ENCODE measurements at regions of chr3 and their contacts with region 1.

Region 1: GRCh38 chr3:195271116-195271858 is at the start of gene XXYLT1:
- DNase-seq: peak; percentile 99
- H3K4me3 Mint-ChIP-seq: peak within 1 kb of the TSS; percentile 85
- H3K27ac Mint-ChIP-seq: peak within 1 kb of the TSS; percentile 71
- H3K4me1 Mint-ChIP-seq: peaks cover 37% of the 10 kb centered on the region
- H3K27me3 Mint-ChIP-seq: no peaks in the 10 kb centered on the region
- CTCF ChIP-seq: peak; percentile 100
- total RNA-seq, gene XXYLT1: 25.9 and 29.2 TPM in 2 replicates

Region 2: DNA sequence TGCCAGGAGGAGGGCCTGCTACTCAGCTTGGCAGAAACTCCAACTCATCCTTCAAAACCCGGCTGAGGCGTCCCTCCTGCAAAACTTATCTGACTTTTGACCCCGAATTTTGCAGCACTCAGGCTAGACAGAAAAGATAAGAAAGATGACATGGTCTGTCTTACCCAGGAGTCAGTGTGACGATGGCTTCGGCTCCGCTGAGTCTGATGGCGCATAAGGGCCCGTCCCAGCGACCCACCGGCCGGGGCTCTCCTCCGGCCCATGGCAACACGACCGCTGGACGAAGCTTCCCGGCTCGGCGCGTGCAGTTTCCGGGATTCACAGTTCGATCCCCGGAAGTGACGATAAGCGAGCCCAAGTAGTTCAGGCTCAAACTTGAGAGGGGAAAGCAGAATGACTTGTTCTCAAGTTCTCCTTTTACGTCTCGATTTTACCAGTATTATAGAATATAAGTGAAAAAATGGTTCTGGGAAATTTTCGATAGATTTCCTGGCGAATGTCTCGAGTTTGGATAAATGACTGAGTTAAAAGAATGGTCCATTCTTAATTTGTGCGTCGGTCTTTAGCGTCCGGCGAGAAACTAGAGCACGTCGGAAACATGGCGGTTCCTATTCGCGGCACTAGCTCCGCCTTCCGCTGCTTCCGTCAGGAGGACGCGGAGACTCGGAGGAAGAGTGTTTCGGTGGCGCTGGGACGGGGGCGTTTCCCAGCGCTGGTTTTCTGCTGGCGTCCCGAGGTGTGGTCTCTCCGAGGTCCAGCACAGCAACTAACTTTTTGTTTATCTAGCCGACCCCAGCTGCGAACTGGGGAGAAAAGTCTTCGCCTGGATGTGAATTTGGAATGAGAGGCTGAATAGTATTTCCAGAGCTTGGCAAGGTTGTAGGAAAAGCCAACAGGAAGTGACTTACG is 599.1 kb before region 1 on chr3 and contains the start of gene LSG1:
- CTCF ChIA-PET with region 1: interaction called, 35 read pairs
- intact Hi-C with region 1: no loop called
- DNase-seq: peak; percentile 94
- H3K4me3 Mint-ChIP-seq: peak within 1 kb of the TSS; percentile 100
- H3K27ac Mint-ChIP-seq: peak within 1 kb of the TSS; percentile 99
- H3K4me1 Mint-ChIP-seq: peaks cover 53% of the 10 kb centered on the region
- H3K27me3 Mint-ChIP-seq: peaks cover 30% of the 10 kb centered on the region
- CTCF ChIP-seq: no peak
- total RNA-seq, gene LSG1: 86.3 and 90.8 TPM in 2 replicates

Region 3: DNA sequence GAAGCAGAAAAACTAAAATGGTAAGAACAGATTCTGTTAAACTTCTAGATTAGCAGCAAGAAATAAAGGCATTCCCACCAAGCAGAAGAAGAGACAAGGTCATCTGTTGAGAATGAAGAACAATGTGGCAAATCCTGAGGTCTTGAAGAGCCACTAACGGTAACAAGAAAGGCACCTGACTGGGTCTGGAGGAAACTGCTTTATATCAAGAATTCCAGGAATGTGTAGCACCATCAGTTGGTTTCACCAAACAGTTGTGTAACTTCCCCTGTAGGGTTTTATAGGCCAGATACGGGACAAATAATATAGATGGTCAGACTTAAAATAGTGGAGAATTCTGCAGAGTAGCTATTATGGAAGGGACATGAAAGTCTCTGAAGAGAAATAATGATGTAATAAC is 114.2 kb after region 1 on chr3:
- CTCF ChIA-PET with region 1: interaction called, 15 read pairs
- intact Hi-C with region 1: no loop called
- DNase-seq: peak; percentile 14
- H3K4me3 Mint-ChIP-seq: peak overlapping the region; percentile 0
- H3K27ac Mint-ChIP-seq: peak overlapping the region; percentile 2
- H3K4me1 Mint-ChIP-seq: peaks cover 66% of the 10 kb centered on the region
- H3K27me3 Mint-ChIP-seq: no peaks in the 10 kb centered on the region
- CTCF ChIP-seq: no peak

Region 4: GRCh38 chr3:195442573-195443390 is 171.5 kb after region 1 on chr3 and contains the start of gene ACAP2:
- CTCF ChIA-PET with region 1: interaction called, 36 read pairs
- intact Hi-C with region 1: loop called (anchors 5 kb)
- DNase-seq: peak; percentile 100
- H3K4me3 Mint-ChIP-seq: peak within 1 kb of the TSS; percentile 100
- H3K27ac Mint-ChIP-seq: peak within 1 kb of the TSS; percentile 94
- H3K4me1 Mint-ChIP-seq: peaks cover 32% of the 10 kb centered on the region
- H3K27me3 Mint-ChIP-seq: no peaks in the 10 kb centered on the region
- CTCF ChIP-seq: no peak
- total RNA-seq, gene ACAP2: 74.0 TPM in 2 replicates

Region 5: GRCh38 chr3:195458316-195458717 is 187.0 kb after region 1 on chr3:
- CTCF ChIA-PET with region 1: interaction called, 4 read pairs
- intact Hi-C with region 1: loop called (anchors 1 kb)
- DNase-seq: no peak
- H3K4me3 Mint-ChIP-seq: no peak overlapping the region
- H3K27ac Mint-ChIP-seq: no peak overlapping the region
- H3K4me1 Mint-ChIP-seq: peaks cover 7% of the 10 kb centered on the region
- H3K27me3 Mint-ChIP-seq: no peaks in the 10 kb centered on the region
- CTCF ChIP-seq: no peak

Region 6: DNA sequence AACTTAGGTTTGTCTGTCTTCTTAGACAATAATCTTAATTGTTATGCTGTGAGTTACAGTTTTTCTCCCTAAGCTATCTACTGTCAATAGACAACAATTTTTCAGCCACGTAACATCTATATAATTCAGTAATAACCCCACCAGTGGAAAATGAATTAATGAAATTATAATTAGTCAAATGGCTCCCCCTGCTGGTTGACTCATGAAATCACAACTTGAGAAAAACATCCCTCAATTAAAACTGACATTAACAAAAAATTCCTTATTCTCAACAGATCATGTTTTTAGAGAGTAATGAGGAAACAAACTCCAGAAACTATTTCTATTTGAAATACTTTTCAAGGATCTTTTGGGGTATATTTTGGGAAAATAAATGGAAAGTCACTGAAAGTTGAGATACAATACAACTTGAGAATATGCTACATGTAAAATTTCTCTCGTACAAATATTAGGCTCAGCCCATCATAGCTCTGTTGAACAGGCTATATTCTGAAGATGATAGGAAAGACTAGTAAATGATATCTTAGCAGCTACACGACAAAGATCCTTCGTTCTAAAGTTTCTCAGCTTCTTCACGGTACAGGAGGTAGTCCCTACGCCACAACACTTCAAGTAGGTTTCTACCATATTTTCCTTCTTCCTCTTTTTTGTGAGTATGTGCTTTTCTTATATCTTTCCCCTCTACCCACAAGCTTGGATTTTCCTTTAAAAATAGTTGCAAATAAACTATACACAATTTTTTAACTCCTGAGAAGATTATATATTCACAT is 251.2 kb after region 1 on chr3:
- CTCF ChIA-PET with region 1: interaction called, 19 read pairs
- intact Hi-C with region 1: loop called (anchors 1 kb)
- DNase-seq: peak; percentile 49
- H3K4me3 Mint-ChIP-seq: no peak overlapping the region
- H3K27ac Mint-ChIP-seq: no peak overlapping the region
- H3K4me1 Mint-ChIP-seq: no peaks in the 10 kb centered on the region
- H3K27me3 Mint-ChIP-seq: no peaks in the 10 kb centered on the region
- CTCF ChIP-seq: peak; percentile 71

Region 7: DNA sequence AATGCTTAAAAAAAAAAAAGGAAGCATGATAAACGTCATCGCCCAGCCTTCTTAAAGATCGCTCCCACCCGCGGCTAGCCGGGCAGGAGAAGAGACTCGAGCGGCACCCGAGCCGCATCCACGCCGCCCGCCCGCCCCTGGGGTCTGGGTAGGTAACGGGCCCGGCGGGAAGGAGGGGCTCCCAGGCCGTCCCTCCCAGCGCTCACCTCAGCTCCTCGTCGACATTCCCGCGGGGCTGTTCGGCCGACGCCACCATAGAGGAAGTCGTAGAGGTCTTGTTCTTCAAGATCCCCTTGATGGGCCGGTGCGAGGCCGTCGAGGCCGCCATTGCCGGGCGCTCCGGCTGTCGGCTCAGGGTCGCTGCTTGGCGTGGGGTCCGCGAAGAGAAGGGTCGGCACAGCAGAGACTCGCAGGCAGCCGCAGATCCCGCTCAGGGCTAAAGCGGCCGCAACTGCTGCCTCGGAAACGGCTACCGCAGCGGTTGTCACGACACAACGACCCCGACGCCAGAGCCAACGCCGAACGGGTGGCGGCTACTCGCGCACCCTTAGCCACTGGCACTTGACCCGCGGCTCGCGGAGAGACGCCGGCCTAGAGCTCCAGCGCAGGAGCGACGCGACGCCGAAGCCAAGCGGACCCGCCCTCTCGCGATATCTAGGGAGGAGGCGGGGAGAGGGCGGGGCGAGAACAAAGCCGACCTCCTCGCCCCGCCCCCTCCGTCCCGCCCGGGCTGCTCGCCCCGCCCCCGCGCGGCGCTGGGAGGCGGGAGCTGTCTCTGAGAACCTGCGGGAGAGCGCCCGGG is 271.6 kb after region 1 on chr3 and contains the start of gene PPP1R2:
- CTCF ChIA-PET with region 1: interaction called, 18 read pairs
- intact Hi-C with region 1: no loop called
- DNase-seq: peak; percentile 98
- H3K4me3 Mint-ChIP-seq: peak within 1 kb of the TSS; percentile 87
- H3K27ac Mint-ChIP-seq: peak within 1 kb of the TSS; percentile 53
- H3K4me1 Mint-ChIP-seq: peaks cover 58% of the 10 kb centered on the region
- H3K27me3 Mint-ChIP-seq: peaks cover 10% of the 10 kb centered on the region
- CTCF ChIP-seq: no peak
- total RNA-seq, gene PPP1R2: 60.6 and 68.2 TPM in 2 replicates

Measured in Calu3 (cell line).